T-cell (primary cell): ENCODE measurements at regions of chr1 and their contacts with region 1.

Region 1: GRCh38 chr1:26864610-26865527 is 1.9 kb downstream of the SFN start:
- DNase-seq: peak; percentile 82 to 96 (median 90)
- ATAC-seq: peak; percentile 94 to 96 (median 94)
- H3K4me3 ChIP-seq: peak overlapping the region; percentile 92 to 99
- H3K4me3 Mint-ChIP-seq: peak overlapping the region; percentile 87 to 95 (median 88)
- H3K27ac ChIP-seq: peak overlapping the region; percentile 72
- H3K27ac Mint-ChIP-seq: peak overlapping the region; percentile 88 to 93
- H3K4me1 ChIP-seq: peaks cover 3 to 32% of the 10 kb centered on the region in 2 experiments
- H3K4me1 Mint-ChIP-seq: peaks cover 17 to 31% (median 23%) of the 10 kb centered on the region in 3 donors
- H3K27me3 ChIP-seq: peaks cover 0 to 2% of the 10 kb centered on the region in 2 experiments
- H3K27me3 Mint-ChIP-seq: no peaks in the 10 kb centered on the region

Region 2: GRCh38 chr1:26799479-26800142 is 65.3 kb before region 1 on chr1:
- CTCF ChIA-PET with region 1: interaction called in 1 of 2 experiments, 15 read pairs
- POLR2A ChIA-PET with region 1: no interaction called
- DNase-seq: peak in 2 of 35 experiments; percentile 13 to 41
- ATAC-seq: peak; percentile 60 to 66 (median 66)
- H3K4me3 ChIP-seq: no peak overlapping the region
- H3K4me3 Mint-ChIP-seq: peak overlapping the region; percentile 49 to 72 (median 63)
- H3K27ac ChIP-seq: peak overlapping the region; percentile 82
- H3K27ac Mint-ChIP-seq: peak overlapping the region; percentile 96 to 97
- H3K4me1 ChIP-seq: peaks cover 13 to 33% of the 10 kb centered on the region in 2 experiments
- H3K4me1 Mint-ChIP-seq: peaks cover 33 to 36% (median 35%) of the 10 kb centered on the region in 3 donors
- H3K27me3 ChIP-seq: no peaks in the 10 kb centered on the region
- H3K27me3 Mint-ChIP-seq: no peaks in the 10 kb centered on the region

Region 3: GRCh38 chr1:26820784-26821269 is 44.0 kb before region 1 on chr1:
- CTCF ChIA-PET with region 1: interaction called in 1 of 2 experiments, 13 read pairs
- POLR2A ChIA-PET with region 1: interaction called in 1 of 2 experiments, 3 read pairs
- DNase-seq: peak in 14 of 35 experiments; percentile 8 to 72 (median 32)
- ATAC-seq: peak; percentile 95 to 97 (median 96)
- H3K4me3 ChIP-seq: peak overlapping the region; percentile 30 to 47
- H3K4me3 Mint-ChIP-seq: peak overlapping the region; percentile 61 to 69 (median 67)
- H3K27ac ChIP-seq: peak overlapping the region; percentile 60
- H3K27ac Mint-ChIP-seq: peak overlapping the region; percentile 89 to 96
- H3K4me1 ChIP-seq: peaks cover 8 to 28% of the 10 kb centered on the region in 2 experiments
- H3K4me1 Mint-ChIP-seq: peaks cover 24 to 35% (median 25%) of the 10 kb centered on the region in 3 donors
- H3K27me3 ChIP-seq: no peaks in the 10 kb centered on the region
- H3K27me3 Mint-ChIP-seq: no peaks in the 10 kb centered on the region

Region 4: GRCh38 chr1:26826261-26827105 is 38.4 kb before region 1 on chr1 and contains the start of gene ZDHHC18:
- CTCF ChIA-PET with region 1: interaction called in 1 of 2 experiments, 13 read pairs
- POLR2A ChIA-PET with region 1: no interaction called
- DNase-seq: peak in 34 of 35 experiments; percentile 33 to 87 (median 63)
- ATAC-seq: peak; percentile 89 to 92 (median 91)
- H3K4me3 ChIP-seq: peak within 1 kb of the TSS; percentile 58 to 67
- H3K4me3 Mint-ChIP-seq: peak within 1 kb of the TSS; percentile 87 to 98 (median 95)
- H3K27ac ChIP-seq: peak within 1 kb of the TSS; percentile 86
- H3K27ac Mint-ChIP-seq: peak within 1 kb of the TSS; percentile 97 to 99
- H3K4me1 ChIP-seq: peaks cover 12 to 61% of the 10 kb centered on the region in 2 experiments
- H3K4me1 Mint-ChIP-seq: peaks cover 51 to 69% (median 61%) of the 10 kb centered on the region in 3 donors
- H3K27me3 ChIP-seq: no peaks in the 10 kb centered on the region
- H3K27me3 Mint-ChIP-seq: no peaks in the 10 kb centered on the region
- total RNA-seq, gene ZDHHC18: 41.1 to 59.9 (median 50.6) TPM

Region 5: GRCh38 chr1:26853156-26853555 is 11.7 kb before region 1 on chr1:
- CTCF ChIA-PET with region 1: no interaction called
- POLR2A ChIA-PET with region 1: interaction called in 1 of 2 experiments, 10 read pairs
- DNase-seq: peak; percentile 53 to 86 (median 72)
- ATAC-seq: peak; percentile 80 to 87 (median 84)
- H3K4me3 ChIP-seq: no peak overlapping the region
- H3K4me3 Mint-ChIP-seq: no peak overlapping the region
- H3K27ac ChIP-seq: no peak overlapping the region
- H3K27ac Mint-ChIP-seq: no peak overlapping the region
- H3K4me1 ChIP-seq: no peaks in the 10 kb centered on the region
- H3K4me1 Mint-ChIP-seq: peaks cover 0 to 5% (median 4%) of the 10 kb centered on the region in 3 donors
- H3K27me3 ChIP-seq: no peaks in the 10 kb centered on the region
- H3K27me3 Mint-ChIP-seq: no peaks in the 10 kb centered on the region

Region 6: DNA sequence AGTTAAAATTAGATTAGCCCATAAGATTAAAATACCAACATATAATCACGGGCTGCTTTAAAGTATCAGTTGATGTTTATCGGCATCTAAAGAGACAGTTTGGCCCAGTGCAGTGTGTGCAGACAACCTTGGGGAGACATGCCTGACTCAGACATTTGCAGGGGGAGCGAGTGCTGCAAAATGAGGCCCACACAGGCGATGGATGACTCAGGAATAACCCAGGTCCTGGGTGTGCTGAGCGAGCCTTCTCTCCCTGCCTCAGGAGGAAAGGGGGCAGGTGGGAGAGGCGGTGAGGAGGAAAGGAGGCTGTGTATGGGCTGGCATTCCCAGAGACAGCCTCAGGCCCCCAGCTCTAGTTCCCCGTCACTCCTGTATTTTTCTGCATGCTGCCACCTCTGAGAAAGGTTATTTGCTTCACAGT is 281.1 kb after region 1 on chr1:
- CTCF ChIA-PET with region 1: no interaction called
- POLR2A ChIA-PET with region 1: no interaction called
- DNase-seq: no peak
- ATAC-seq: no peak
- H3K4me3 ChIP-seq: no peak overlapping the region
- H3K4me3 Mint-ChIP-seq: no peak overlapping the region
- H3K27ac ChIP-seq: no peak overlapping the region
- H3K27ac Mint-ChIP-seq: peak overlapping the region in 1 of 2 donors; percentile 5
- H3K4me1 ChIP-seq: peaks cover 28 to 48% of the 10 kb centered on the region in 2 experiments
- H3K4me1 Mint-ChIP-seq: peaks cover 59 to 72% (median 62%) of the 10 kb centered on the region in 3 donors
- H3K27me3 ChIP-seq: no peaks in the 10 kb centered on the region
- H3K27me3 Mint-ChIP-seq: no peaks in the 10 kb centered on the region